Posterior cingulate gyrus (tissue), 11 donors: ENCODE measurements at regions of chr19 and their contacts with region 1.

Region 1: GRCh38 chr19:8412783-8413628 is at the start of gene MARCHF2:
- DNase-seq: peak; percentile 91 to 100 (median 96)

Region 2: GRCh38 chr19:8487137-8487851 is 74.3 kb after region 1 on chr19:
- intact Hi-C with region 1: no loop called
- DNase-seq: peak in 6 of 10 donors; percentile 12 to 88 (median 54)

Region 3: DNA sequence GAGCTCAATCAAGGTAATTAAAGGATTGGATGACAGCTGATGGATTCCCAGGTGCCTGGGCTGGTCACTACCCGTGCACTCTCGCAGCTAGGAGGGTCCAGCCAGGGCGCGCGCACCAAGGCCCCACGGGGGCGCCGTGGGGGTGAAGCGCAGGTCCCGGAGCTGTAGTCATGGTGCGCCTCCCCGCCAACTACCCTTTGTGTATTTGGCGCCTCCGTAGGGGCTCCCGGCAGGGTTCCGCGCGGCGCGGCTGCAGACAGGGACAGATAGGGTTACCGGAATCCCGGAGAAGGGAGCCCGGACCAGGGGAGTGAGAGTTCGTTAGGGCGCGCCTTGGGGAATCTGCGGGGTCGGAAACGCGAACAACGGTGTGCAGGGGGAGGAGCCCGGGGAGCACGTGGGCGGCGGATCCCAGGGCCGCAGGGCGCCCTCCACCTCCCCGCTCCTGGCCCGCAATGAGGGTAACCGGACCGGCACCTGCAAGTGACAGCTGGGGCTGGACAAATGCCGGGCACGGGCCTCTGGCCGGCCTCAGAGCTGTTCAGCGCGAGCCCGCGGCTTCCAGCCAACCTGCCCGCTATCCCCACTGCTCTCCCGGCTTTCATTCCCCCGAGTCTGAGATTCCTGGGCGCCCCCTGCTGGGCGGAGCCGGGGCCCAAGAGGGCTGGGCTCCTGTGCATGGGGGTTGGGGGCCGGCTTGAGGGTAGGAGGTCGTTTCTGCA is 92.8 kb after region 1 on chr19:
- intact Hi-C with region 1: loop called (anchors 5 kb)
- DNase-seq: peak; percentile 67 to 97 (median 84)

Region 4: GRCh38 chr19:8517551-8518442 is 104.8 kb after region 1 on chr19:
- intact Hi-C with region 1: no loop called
- DNase-seq: no peak